Activated CD8-positive, alpha-beta memory T cell treated with anti-CD3 and anti-CD28 coated beads, Interleukin-2, amount 10 ng/mL, durations not matched to agents 7 days and 5 days (primary cell): ENCODE measurements at regions of chr11 and their contacts with region 1.

Region 1: GRCh38 chr11:128630367-128631230 is 43.2 kb upstream of the ETS1 start:
- DNase-seq: peak; percentile 93
- ATAC-seq: peak; percentile 84
- H3K4me3 Mint-ChIP-seq: peak overlapping the region; percentile 52
- H3K27ac Mint-ChIP-seq: peak overlapping the region; percentile 93
- H3K4me1 Mint-ChIP-seq: peaks cover 67% of the 10 kb centered on the region
- H3K27me3 Mint-ChIP-seq: no peaks in the 10 kb centered on the region

Region 2: DNA sequence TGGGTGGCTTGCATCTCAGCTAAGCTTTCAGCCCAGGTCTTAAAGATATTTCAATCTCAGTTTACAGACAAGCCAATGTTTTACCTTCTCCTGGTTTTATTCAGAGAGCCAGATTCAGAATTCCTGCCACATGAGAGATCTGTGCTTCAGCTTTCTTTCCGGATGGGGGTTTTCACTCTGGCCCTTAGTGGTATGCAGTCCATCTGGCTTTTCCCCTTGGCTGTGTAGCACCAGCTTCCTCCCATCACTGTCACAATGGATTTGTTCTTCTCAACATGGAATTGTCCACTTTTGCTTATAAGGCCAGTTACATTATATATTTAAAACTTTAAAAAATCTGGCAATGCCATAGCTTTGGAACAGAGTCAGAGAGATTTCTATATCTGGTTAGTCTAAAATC is 347.1 kb before region 1 on chr11:
- CTCF ChIA-PET with region 1: interaction called, 92 read pairs
- DNase-seq: no peak
- ATAC-seq: no peak
- H3K4me3 Mint-ChIP-seq: no peak overlapping the region
- H3K27ac Mint-ChIP-seq: no peak overlapping the region
- H3K4me1 Mint-ChIP-seq: peaks cover 32% of the 10 kb centered on the region
- H3K27me3 Mint-ChIP-seq: peaks cover 5% of the 10 kb centered on the region

Region 3: DNA sequence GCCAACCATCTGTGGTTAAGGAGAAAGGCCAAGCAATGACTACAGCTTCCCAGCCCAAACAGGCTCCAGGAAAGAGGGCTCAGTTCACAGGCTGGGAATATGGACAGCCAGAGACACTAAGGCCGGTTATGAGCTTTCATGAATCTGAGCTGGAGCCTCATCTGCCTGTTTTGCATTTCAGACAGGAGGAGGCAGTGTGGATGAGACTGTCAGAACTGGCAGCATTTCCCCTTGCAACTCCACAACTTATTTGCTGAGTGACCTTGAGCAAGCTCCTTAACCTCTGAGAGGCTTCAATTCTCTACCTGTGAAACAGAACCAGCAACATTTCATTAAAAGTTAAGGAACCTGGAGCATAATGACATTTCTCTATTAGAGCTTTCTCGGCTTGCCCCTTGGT is 307.2 kb before region 1 on chr11:
- CTCF ChIA-PET with region 1: interaction called, 48 read pairs
- DNase-seq: peak; percentile 77
- ATAC-seq: peak; percentile 25
- H3K4me3 Mint-ChIP-seq: peak overlapping the region; percentile 60
- H3K27ac Mint-ChIP-seq: peak overlapping the region; percentile 93
- H3K4me1 Mint-ChIP-seq: peaks cover 91% of the 10 kb centered on the region
- H3K27me3 Mint-ChIP-seq: no peaks in the 10 kb centered on the region

Region 4: DNA sequence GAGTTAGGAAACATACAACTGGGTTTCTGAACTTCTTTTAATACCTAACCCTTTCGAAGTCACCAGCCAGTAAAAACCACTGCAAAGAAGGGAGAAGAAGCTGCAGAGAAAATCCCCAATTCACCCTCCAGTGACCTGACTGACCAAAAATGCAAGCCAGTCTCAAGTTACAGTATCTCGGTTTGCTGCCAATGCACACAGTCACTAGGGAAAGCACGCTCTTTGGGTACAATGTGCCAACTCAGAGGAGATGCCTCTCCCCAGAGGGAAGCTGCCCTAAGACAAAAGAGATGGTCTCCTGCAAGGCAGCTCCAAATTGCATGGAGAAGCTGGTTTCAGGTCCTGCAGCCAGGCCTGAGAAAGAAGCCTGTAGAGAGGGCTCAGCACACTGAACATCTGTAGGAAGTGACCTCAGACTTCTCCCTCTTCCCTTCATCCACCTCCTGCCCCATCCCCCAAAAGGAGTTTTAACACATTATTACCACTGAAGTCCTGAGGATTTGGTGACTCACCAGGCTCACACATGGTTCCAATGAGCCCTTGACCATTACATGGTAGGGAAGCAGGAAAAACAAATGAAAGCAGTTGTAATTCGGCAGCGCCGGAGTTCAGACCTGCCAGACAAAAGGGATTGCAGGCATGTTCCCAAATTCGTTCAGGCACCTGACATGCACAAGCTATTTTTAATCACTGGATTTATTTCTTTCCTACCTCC is 133.4 kb before region 1 on chr11:
- CTCF ChIA-PET with region 1: interaction called, 13 read pairs
- DNase-seq: no peak
- ATAC-seq: no peak
- H3K4me3 Mint-ChIP-seq: peak overlapping the region; percentile 67
- H3K27ac Mint-ChIP-seq: peak overlapping the region; percentile 88
- H3K4me1 Mint-ChIP-seq: peaks cover 96% of the 10 kb centered on the region
- H3K27me3 Mint-ChIP-seq: no peaks in the 10 kb centered on the region

Region 5: DNA sequence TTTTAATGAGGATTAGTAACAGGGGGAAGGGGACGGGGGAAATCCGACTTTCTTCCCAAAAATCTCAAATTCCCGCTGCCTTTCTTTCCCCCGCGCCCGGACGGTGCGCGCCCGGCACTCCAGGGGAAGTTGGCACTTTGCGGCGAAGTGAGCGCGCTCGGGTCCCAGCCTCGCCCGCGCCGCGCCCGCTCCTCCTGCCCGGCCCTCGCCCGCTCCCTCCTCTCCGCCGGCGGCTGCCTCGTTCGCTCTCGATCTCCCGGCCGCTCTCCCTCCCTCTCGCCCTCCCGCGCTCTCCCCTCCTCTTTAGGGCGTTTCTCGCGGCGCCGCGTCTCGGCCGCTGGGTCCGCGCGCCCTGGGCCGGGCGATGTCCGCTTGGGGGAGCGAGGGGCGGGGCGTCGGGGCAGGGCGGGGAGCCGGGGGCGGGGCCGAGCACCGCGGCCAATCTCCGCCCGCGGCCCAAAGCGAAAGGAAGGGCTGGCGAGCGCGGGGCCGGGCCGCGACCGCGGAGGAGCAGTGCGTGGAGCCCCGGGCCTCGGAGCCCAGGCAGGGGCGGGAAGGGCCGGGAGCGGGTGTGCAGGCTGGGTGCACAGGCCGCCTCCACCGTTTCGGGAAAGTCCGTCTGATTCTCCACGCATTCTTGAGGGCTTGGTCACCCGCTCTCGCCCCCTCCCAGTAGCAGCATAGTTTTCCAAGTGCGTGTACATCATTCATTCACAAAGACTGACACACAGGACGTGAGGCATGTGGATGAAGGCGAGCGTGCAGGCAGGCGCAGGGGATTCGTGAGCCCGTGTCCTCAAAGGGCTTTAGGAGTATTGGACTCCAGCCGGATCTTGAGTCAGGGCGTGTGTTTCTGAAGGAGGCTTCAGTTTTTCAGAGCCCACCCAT is 108.3 kb before region 1 on chr11:
- CTCF ChIA-PET with region 1: interaction called, 44 read pairs
- DNase-seq: peak; percentile 95
- ATAC-seq: peak; percentile 79
- H3K4me3 Mint-ChIP-seq: peak overlapping the region; percentile 99
- H3K27ac Mint-ChIP-seq: peak overlapping the region; percentile 99
- H3K4me1 Mint-ChIP-seq: peaks cover 41% of the 10 kb centered on the region
- H3K27me3 Mint-ChIP-seq: no peaks in the 10 kb centered on the region

Region 6: DNA sequence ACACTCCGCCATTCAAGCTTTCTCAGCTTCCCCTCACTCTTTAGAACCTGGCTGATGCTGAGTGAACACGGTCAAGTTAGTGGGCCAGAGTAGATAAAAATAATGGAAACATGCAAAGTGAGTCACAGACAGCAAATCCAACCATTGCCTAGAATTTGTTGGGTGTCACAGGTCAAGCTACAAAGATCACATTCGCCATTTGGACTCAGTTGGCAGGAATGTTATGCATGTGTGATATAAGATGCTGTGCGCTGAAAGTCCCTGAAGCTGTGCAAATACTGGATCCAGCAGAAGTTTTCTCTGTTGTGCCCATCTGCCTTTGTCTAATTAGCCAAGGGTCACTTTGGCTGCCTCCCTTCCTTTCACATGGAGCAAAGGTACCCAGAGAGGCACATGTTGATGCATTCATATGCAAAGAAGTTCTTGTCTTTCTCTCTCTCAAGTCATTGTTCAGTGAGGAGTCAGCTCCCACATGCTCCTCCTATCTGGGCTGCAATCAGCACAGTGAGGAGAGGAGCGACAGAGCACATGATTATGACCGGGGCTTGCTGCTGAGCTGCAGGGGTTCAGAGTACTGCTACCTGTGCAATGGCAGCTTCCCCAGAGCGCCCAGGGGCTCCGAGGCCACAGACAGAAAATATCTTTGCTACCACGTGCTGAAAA is 103.0 kb after region 1 on chr11:
- CTCF ChIA-PET with region 1: interaction called, 20 read pairs
- DNase-seq: peak; percentile 75
- ATAC-seq: peak; percentile 49
- H3K4me3 Mint-ChIP-seq: peak overlapping the region; percentile 59
- H3K27ac Mint-ChIP-seq: peak overlapping the region; percentile 92
- H3K4me1 Mint-ChIP-seq: peaks cover 96% of the 10 kb centered on the region
- H3K27me3 Mint-ChIP-seq: no peaks in the 10 kb centered on the region